Adrenal gland (tissue), 19 donors: ENCODE measurements at regions of chr12 and their contacts with region 1.

Region 1: GRCh38 chr12:57213058-57213715 is 3.4 kb upstream of the NXPH4 start:
- DNase-seq: peak; percentile 85 to 96 (median 89)
- H3K4me3 ChIP-seq: no peak overlapping the region
- H3K27ac ChIP-seq: no peak overlapping the region
- H3K4me1 ChIP-seq: peaks cover 6 to 21% of the 10 kb centered on the region in 2 donors
- H3K27me3 ChIP-seq: peaks cover 24% of the 10 kb centered on the region
- CTCF ChIP-seq: peak; percentile 91 to 97 (median 93)
- POLR2A ChIP-seq: no peak

Region 2: GRCh38 chr12:57242693-57243454 is 29.7 kb after region 1 on chr12:
- intact Hi-C with region 1: loop called (anchors 2 to 5 kb)
- DNase-seq: peak in 2 of 7 donors; percentile 46 to 65
- H3K4me3 ChIP-seq: peak overlapping the region in 1 of 4 donors; percentile 45
- H3K27ac ChIP-seq: no peak overlapping the region
- H3K4me1 ChIP-seq: peaks cover 30 to 50% of the 10 kb centered on the region in 2 donors
- H3K27me3 ChIP-seq: peaks cover 36% of the 10 kb centered on the region
- CTCF ChIP-seq: peak in 5 of 6 experiments; percentile 37 to 49 (median 43)
- POLR2A ChIP-seq: no peak

Region 3: DNA sequence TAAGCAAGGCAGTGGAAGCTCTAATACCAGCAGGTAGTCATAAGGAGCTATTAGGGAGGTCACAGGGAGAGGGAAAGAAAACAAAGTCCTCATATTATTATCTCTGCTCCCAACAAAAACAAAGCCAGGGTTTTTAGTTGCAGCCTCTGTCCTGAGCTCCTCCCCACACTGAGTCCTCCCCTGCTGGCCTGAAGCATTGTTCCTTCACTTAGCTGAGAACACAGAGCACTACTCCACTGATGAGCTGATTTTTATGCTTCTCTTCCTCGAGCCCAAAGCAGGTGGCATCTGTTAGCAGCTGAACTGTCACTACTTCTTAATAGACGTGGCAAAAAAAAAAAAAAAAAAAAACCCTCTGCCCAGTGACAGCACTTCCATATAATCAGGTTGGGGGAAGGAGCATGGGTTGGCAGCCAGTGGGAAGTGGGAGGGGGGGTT is 48.3 kb after region 1 on chr12:
- intact Hi-C with region 1: no loop called
- DNase-seq: peak in 1 of 7 donors; percentile 68
- H3K4me3 ChIP-seq: no peak overlapping the region
- H3K27ac ChIP-seq: no peak overlapping the region
- H3K4me1 ChIP-seq: peaks cover 11 to 16% of the 10 kb centered on the region in 2 donors
- H3K27me3 ChIP-seq: no peaks in the 10 kb centered on the region
- CTCF ChIP-seq: no peak
- POLR2A ChIP-seq: no peak